ENCODE measurements at regions of chr20 and their contacts with region 1.

Region 1: DNA sequence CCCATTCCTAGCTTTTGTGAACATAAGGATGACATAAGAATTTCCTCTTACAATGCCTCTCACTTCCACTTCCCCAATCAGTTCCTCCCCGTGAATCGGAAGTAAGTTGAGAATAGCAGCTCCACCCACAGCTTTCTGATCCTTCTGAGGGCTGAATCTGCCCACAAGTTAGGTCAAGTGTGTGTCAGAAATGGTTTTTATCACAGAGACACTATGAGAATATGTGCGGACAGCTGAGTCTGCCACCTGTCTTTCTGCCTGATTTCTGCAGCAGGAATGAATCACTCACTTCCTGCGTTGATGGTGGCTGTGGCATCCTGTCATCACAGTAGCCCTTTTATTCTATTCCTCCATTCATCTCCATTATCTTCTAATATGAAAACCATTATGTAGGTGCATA is 70.2 kb downstream of the RIN2 start:
- H3K4me3 Mint-ChIP-seq: no peak overlapping the region
- H3K27ac Mint-ChIP-seq: no peak overlapping the region
- H3K4me1 Mint-ChIP-seq: peaks cover 53% of the 10 kb centered on the region
- H3K27me3 Mint-ChIP-seq: peaks cover 8% of the 10 kb centered on the region

Region 2: GRCh38 chr20:20003031-20003954 is 175.1 kb after region 1 on chr20:
- intact Hi-C with region 1: loop called (anchors 5 kb)
- H3K4me3 Mint-ChIP-seq: peak overlapping the region; percentile 73
- H3K27ac Mint-ChIP-seq: peak overlapping the region; percentile 93
- H3K4me1 Mint-ChIP-seq: peaks cover 87% of the 10 kb centered on the region
- H3K27me3 Mint-ChIP-seq: no peaks in the 10 kb centered on the region